ENCODE measurements at regions of chr6 and their contacts with region 1.

Region 1: DNA sequence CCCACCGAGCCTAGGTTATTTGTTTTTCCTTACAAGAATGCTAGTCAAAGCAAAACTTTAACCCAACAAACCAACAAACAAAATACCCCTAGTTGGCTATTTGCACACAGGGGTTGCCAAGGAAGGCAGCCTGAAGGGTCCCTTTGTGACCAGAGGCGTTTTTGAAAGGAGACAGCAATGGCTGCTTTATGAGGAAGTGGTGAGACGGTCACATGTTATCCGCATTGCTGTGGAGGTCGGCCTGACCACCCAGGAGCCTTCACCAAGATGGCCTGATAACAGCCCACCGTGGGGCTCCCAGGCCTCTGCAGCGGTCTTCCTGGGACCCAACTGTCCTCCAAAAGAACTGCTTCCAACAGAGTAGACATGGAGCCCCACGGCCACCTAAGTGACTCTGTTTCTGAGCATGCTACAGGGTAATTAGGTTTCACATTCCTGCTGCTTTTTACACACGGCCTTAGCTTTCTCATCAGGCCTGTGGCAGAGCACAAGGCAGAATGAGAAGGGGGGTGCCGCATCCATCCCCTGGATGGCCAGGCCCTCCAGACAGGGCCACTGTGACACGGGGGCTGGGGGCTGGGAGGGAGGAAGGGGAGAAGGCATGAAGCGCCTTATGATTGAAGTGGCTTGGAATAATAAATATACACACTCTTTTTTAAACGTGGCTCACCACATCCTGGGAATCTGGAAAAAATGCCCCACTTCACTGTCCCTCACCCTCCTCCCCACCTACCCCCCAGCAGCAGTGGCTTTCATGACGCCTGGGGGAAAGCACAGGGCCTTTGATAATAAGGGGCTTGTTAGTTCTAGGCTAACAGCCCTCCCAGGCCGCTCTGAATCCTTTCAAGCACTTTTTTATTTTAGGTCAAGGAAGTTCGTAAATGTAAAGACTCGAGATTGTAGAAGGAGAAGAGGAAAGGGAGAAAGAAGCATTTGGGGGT is 86.0 kb downstream of the CLIC5 start:
- DNase-seq: no peak

Region 2: DNA sequence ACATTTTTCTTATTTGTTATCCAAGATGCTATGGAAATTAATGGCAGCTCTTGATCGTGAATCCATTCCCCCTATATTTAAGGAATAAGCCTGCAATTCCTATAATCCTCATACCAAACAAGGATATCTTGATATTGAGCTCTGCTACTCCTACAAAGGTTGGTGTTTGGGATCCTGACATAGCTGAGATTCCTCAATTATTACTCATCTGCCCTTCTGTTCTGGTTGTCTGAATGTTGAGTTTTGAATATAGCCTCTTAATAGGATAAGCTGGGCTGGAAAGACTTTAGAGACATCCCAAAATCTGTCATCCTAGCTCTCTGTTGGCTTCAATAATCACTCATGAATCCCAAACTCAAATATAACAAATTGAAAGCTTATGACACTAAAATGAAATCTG is 36.1 kb after region 1 on chr6:
- in situ Hi-C with region 1: loop called (anchors 5 kb)
- DNase-seq: no peak

Region 3: GRCh38 chr6:46011241-46012085 is 81.8 kb after region 1 on chr6:
- in situ Hi-C with region 1: no loop called
- DNase-seq: no peak